ENCODE measurements at regions of chr1 and their contacts with region 1.

Region 1: DNA sequence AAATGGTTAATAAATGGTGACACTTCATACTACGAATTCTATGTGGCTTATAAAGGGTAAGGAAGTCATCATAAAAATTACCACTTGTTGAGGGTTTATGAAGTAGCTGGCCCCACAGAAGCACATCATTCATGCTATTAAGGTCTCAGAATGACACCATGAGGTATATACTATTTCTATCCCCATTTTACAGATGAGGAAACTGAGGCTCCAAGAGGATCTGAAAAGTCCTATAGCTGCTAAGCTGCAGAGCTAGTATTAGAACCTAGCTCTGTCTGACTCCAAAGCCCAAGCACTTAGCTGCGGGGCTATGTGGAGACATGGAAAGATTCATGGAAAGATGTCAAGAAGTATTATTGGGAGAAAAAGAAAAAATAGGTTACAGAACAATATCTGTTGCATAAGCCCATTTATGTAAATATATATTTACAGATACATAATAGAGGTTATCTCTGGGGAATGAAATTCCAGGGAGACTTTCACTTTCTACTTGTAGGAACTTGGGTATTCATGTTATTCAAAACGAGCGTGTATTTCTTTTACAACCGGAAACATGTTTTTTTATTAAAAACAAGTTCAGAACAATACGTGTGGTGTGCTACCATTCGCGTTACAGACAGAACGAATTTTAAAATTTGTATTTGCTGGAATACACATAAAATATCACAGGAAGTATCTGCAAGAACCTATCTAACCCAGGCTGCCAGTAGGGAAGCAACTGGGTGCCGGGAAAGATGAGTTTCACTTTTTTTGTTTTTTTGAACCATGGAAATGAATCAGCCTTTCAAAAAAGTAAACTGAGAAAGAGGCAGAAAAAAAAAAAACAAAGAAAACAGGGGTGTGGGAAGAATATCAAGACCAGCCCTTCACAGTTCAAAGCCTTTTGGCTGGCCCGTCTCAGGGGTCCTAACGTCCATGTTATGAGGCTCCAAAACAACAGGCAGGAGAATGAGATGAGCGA is 13.4 kb downstream of the SPOCD1 start:
- DNase-seq: no peak
- ATAC-seq: no peak
- H3K4me3 ChIP-seq: peak overlapping the region in 2 of 4 donors; percentile 12 to 33
- H3K27ac ChIP-seq: no peak overlapping the region
- H3K4me1 ChIP-seq: no peaks in the 10 kb centered on the region
- H3K27me3 ChIP-seq: peaks cover 0 to 10% (median 2%) of the 10 kb centered on the region in 3 donors
- CTCF ChIP-seq: no peak
- POLR2A ChIP-seq: no peak

Region 2: DNA sequence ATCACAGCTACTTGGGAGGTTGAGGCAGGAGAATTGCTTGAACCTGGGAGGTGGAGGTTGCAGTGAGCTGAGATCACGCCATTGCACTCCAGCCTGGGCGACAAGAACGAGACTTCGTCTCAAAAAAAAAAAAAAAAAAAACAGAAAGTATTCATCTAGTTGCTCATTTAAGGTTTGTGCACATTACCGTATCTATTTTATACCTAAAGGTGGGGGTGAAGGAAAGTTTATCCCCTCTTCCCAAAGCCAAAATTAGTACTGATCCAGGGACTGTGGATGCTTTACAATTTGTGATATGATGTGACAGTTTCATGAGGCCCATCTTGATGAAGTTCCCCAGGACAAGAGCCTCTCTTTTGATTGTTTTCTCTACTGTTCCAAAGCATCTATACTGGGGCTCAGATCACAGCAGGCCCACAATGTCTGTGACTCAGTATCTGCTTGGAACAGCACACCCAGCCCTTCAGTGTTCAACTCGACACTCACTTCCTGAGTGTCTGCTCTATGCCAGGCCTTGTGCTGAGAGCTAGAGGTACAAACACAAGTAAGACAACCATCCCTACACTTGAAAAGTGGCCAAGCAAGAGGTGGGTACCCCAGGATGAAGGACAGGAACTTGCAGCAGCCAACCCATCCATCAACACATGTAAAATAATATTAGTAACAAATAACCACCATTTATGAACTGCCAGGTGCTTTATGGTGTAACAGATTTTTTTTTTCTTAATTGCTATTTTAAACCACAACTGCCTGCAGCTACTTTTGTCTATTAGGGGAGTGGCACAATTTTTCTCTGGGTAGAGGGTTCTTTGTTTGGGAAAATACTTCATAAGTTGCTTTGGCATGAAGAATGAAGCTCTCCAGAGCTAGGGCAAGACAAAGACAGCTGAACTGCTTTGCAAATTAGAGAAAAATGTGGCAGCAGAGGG is 182.2 kb after region 1 on chr1:
- in situ Hi-C with region 1: loop called in 1 of 4 experiments (anchors 10 kb)
- intact Hi-C with region 1: no loop called
- DNase-seq: no peak
- ATAC-seq: no peak
- H3K4me3 ChIP-seq: no peak overlapping the region
- H3K27ac ChIP-seq: no peak overlapping the region
- H3K4me1 ChIP-seq: no peaks in the 10 kb centered on the region
- H3K27me3 ChIP-seq: no peaks in the 10 kb centered on the region
- CTCF ChIP-seq: no peak
- POLR2A ChIP-seq: no peak

Measured in gastrocnemius medialis (tissue), 4 donors.